ENCODE measurements at regions of chr2 and their contacts with region 1.

Region 1: DNA sequence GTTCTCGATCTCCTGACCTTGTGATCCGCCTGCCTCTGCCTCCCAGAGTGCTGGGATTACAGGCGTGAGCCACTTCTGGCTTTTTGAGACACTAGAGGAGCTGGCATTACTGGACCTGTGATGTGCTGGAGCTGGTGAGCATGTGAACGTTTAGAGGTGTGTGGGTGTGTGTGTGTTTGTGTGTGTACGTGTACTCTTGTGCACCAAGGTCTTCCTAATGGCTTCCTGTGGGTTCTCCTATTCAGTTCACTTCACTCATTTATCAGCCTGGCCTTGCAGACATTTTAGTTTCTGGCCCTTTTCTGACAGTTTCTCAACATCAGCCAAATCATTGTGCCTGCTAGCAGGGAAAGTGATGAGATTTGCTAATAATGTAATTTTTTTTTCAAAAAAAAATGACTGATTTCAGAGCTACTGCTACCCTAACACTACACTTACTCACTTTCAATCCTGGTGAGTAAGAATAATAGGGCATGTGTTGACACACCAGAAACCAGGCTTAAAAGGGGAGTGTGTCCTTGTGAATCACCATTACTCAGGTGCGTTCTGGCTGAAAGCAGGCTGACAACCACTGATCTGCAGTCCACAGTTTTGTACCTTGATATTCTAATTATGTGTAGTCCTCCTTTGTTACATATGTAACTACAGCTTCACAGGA is 41.0 kb upstream of the ACTR3 start:
- DNase-seq: peak; percentile 66
- ATAC-seq: peak; percentile 99
- H3K4me3 Mint-ChIP-seq: no peak overlapping the region
- H3K27ac Mint-ChIP-seq: peak overlapping the region; percentile 85
- H3K4me1 Mint-ChIP-seq: peaks cover 16% of the 10 kb centered on the region
- H3K27me3 Mint-ChIP-seq: no peaks in the 10 kb centered on the region

Region 2: DNA sequence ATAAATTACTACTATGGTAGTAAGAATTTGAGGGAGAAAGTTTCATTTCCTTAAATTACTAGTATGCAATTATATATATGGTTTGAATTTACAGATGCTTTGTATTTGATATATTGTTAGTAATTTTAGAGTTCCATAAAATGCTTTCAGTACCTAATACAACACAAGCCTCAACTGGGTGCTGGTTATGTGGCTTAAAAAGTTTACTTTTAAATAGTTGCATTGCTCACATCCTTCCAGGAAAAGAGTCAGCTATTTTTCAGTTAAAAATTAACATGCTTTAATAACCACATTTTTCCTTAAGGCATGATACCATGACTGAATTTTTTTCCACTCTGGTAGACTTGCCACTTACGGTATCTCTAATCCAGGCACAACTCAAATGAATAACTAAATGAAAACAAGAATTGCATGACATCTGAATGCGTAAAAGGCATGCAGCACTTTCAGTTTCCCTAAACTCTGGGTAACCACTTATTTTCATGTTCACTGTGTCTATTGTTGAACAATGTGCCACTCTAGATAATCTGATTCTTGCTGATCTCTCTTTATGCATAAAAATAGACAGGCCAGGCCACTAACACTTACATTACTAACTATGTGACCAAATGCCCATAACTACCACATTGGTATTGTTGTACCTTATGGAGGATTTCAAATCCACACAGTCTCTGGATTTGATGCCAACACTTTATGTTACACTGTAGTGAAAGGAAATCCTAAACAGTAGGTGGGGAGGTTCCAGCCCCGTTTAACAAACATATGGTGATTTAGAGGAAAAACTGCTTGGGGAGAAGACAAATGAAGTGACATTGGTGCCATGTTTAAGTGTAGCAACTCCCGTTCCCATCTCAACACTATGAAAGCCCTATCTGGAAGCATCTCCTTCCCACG is 56.9 kb before region 1 on chr2:
- CTCF ChIA-PET with region 1: interaction called, 4 read pairs
- POLR2A ChIA-PET with region 1: interaction called, 8 read pairs
- intact Hi-C with region 1: loop called (anchors 1 kb)
- DNase-seq: peak; percentile 20
- ATAC-seq: peak; percentile 86
- H3K4me3 Mint-ChIP-seq: peak overlapping the region; percentile 4
- H3K27ac Mint-ChIP-seq: peak overlapping the region; percentile 89
- H3K4me1 Mint-ChIP-seq: peaks cover 34% of the 10 kb centered on the region
- H3K27me3 Mint-ChIP-seq: no peaks in the 10 kb centered on the region

Region 3: GRCh38 chr2:113863144-113863543 is 14.3 kb after region 1 on chr2:
- CTCF ChIA-PET with region 1: interaction called, 11 read pairs
- POLR2A ChIA-PET with region 1: no interaction called
- intact Hi-C with region 1: no loop called
- DNase-seq: no peak
- ATAC-seq: no peak
- H3K4me3 Mint-ChIP-seq: no peak overlapping the region
- H3K27ac Mint-ChIP-seq: no peak overlapping the region
- H3K4me1 Mint-ChIP-seq: peaks cover 1% of the 10 kb centered on the region
- H3K27me3 Mint-ChIP-seq: no peaks in the 10 kb centered on the region

Region 4: GRCh38 chr2:113876503-113877387 is 27.9 kb after region 1 on chr2:
- CTCF ChIA-PET with region 1: interaction called, 5 read pairs
- POLR2A ChIA-PET with region 1: interaction called, 9 read pairs
- intact Hi-C with region 1: loop called (anchors 1 kb)
- DNase-seq: peak; percentile 92
- ATAC-seq: peak; percentile 93
- H3K4me3 Mint-ChIP-seq: peak overlapping the region; percentile 27
- H3K27ac Mint-ChIP-seq: peak overlapping the region; percentile 79
- H3K4me1 Mint-ChIP-seq: peaks cover 43% of the 10 kb centered on the region
- H3K27me3 Mint-ChIP-seq: no peaks in the 10 kb centered on the region

Region 5: GRCh38 chr2:114134146-114134545 is 285.3 kb after region 1 on chr2:
- CTCF ChIA-PET with region 1: no interaction called
- POLR2A ChIA-PET with region 1: no interaction called
- intact Hi-C with region 1: no loop called
- DNase-seq: no peak
- ATAC-seq: no peak
- H3K4me3 Mint-ChIP-seq: no peak overlapping the region
- H3K27ac Mint-ChIP-seq: no peak overlapping the region
- H3K4me1 Mint-ChIP-seq: no peaks in the 10 kb centered on the region
- H3K27me3 Mint-ChIP-seq: no peaks in the 10 kb centered on the region

Measured in activated CD4-positive, alpha-beta T cell treated with anti-CD3 and anti-CD28 coated beads for 36 hours (primary cell).